ENCODE measurements at regions of chr10 and their contacts with region 1.

Region 1: GRCh38 chr10:96831867-96832720 is at the start of gene LCOR:
- DNase-seq: peak; percentile 85
- H3K4me3 Mint-ChIP-seq: peak within 1 kb of the TSS; percentile 92
- H3K27ac Mint-ChIP-seq: peak within 1 kb of the TSS; percentile 96
- H3K4me1 Mint-ChIP-seq: peaks cover 22% of the 10 kb centered on the region
- H3K27me3 Mint-ChIP-seq: no peaks in the 10 kb centered on the region
- CTCF ChIP-seq: no peak
- total RNA-seq, gene LCOR: 50.1 and 52.8 TPM in 2 replicates

Region 2: DNA sequence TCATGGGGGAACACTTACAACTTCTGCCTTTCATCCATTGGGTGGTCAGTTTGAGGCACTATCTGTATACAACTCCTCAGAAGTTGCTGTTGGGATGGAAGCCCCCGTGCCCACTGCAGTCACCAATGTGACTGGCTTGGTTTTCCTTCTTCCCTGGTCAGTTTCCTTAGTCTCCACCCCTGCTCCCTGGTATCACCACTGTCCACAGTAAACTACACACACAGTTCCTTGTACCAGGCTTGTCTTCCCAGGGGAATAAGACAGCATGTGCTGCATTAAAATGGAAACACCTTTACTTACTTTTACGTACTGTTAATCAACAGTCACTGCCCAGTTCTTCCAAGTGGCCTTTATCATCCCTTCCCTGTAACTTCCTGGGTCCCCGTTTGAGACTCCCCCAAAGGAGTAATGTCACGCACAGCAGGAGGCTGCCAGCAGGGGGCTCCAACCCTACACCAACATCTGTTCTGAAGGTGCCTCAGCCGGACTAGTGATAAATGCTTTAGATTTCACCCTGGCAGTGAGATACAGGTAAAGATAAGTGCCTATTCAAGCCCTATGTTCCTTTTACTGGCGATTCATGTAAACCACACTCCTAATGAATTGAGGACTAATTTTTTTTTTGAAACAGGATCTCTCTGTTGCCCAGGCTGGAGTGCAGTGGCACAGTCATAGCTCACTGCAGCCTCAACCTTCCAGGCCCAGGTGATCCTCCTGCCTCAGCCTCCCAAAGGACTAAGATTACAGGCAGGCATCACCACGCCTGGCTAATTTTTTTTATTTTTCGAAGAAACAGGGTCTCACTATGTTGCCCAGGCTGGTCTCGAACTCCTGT is 66.5 kb before region 1 on chr10:
- CTCF ChIA-PET with region 1: no interaction called
- intact Hi-C with region 1: loop called (anchors 1 kb)
- DNase-seq: peak; percentile 75
- H3K4me3 Mint-ChIP-seq: no peak overlapping the region
- H3K27ac Mint-ChIP-seq: no peak overlapping the region
- H3K4me1 Mint-ChIP-seq: peaks cover 25% of the 10 kb centered on the region
- H3K27me3 Mint-ChIP-seq: no peaks in the 10 kb centered on the region
- CTCF ChIP-seq: peak; percentile 64